ENCODE measurements at regions of chr15 and their contacts with region 1.

Region 1: GRCh38 chr15:42207674-42208579 is at the start of gene VPS39:
- DNase-seq: peak; percentile 83
- H3K4me3 ChIP-seq: peak within 1 kb of the TSS; percentile 98
- H3K27ac ChIP-seq: peak within 1 kb of the TSS; percentile 23
- H3K4me1 ChIP-seq: peaks cover 18% of the 10 kb centered on the region
- CTCF ChIP-seq: no peak
- total RNA-seq, gene VPS39: 25.1 and 27.5 TPM in 2 replicates

Region 2: DNA sequence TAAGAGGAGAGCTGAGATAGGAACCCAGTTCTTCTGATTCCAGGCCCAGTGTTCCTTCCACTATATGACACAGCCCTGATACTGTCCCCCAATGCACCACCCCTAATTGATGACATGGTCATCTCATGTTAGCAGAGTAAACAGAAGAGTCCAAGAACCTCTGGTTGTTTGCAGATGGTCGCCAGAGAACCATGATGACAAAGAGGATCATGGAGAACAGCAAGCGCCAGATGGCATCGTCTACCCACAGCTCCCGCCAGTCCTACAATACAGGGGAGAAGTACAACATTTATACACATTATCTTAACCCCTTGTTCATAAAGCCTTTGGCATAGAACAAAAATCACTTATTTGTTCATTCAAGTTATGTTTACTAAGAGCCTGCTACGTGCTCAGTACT is 18.7 kb after region 1 on chr15:
- CTCF ChIA-PET with region 1: no interaction called
- POLR2A ChIA-PET with region 1: interaction called, 16 read pairs
- intact Hi-C with region 1: no loop called
- DNase-seq: no peak
- H3K4me3 ChIP-seq: no peak overlapping the region
- H3K27ac ChIP-seq: no peak overlapping the region
- H3K4me1 ChIP-seq: no peaks in the 10 kb centered on the region
- CTCF ChIP-seq: no peak

Region 3: GRCh38 chr15:42474827-42475226 is 266.9 kb after region 1 on chr15:
- CTCF ChIA-PET with region 1: no interaction called
- POLR2A ChIA-PET with region 1: no interaction called
- intact Hi-C with region 1: loop called (anchors 10 kb)
- DNase-seq: no peak
- H3K4me3 ChIP-seq: no peak overlapping the region
- H3K27ac ChIP-seq: no peak overlapping the region
- H3K4me1 ChIP-seq: peaks cover 13% of the 10 kb centered on the region
- CTCF ChIP-seq: no peak

Measured in OCI-LY7 (cell line).